HCT116 (cell line): ENCODE measurements at regions of chr1 and their contacts with region 1.

Region 1: GRCh38 chr1:150186789-150187559 is 37.3 kb downstream of the PLEKHO1 start:
- DNase-seq: peak; percentile 38
- ATAC-seq: peak; percentile 74
- H3K4me3 ChIP-seq: peak overlapping the region; percentile 22 to 44
- H3K27ac ChIP-seq: peak overlapping the region; percentile 61
- H3K4me1 ChIP-seq: peaks cover 14 to 25% of the 10 kb centered on the region in 2 experiments
- H3K27me3 ChIP-seq: no peaks in the 10 kb centered on the region
- CTCF ChIP-seq: peak; percentile 39 to 63 (median 56); a peak in 4 of 6 replicates
- POLR2A ChIP-seq: no peak
- RAD21 ChIP-seq: peak; percentile 83

Region 2: GRCh38 chr1:149962123-149962548 is 224.8 kb before region 1 on chr1:
- CTCF ChIA-PET with region 1: interaction called, 6 read pairs
- POLR2A ChIA-PET with region 1: no interaction called
- RAD21 ChIA-PET with region 1: no interaction called
- intact Hi-C with region 1: loop called (anchors 1 kb)
- DNase-seq: peak; percentile 58
- ATAC-seq: peak; percentile 92
- H3K4me3 ChIP-seq: no peak overlapping the region
- H3K27ac ChIP-seq: peak overlapping the region; percentile 33; the same call in 1 of the 2 replicates
- H3K4me1 ChIP-seq: no peaks in the 10 kb centered on the region
- H3K27me3 ChIP-seq: no peaks in the 10 kb centered on the region
- CTCF ChIP-seq: peak; percentile 50 to 83 (median 71); a peak in 5 of 6 replicates
- POLR2A ChIP-seq: no peak
- RAD21 ChIP-seq: peak; percentile 90

Region 3: DNA sequence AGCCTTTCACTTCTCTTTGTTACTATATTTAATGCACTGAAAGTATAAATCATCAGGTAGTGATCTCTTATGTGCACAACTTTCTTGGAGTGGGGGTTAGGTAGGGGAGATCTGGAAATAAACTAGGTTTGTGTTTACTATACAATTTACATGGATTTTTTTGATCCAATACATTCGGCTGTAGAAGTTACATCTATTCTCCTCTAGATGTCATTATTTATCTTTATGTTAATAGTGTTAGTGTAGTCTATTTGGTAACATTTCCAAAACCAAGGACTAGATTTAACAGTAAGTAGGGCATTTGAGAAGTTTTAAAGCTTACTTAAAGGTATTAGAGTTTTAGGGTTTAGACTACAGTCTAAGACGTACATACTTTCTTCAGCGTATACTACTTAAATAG is 114.0 kb before region 1 on chr1:
- CTCF ChIA-PET with region 1: interaction called, 28 read pairs
- POLR2A ChIA-PET with region 1: interaction called, 5 read pairs
- RAD21 ChIA-PET with region 1: interaction called in 1 of 2 experiments, 9 read pairs
- intact Hi-C with region 1: loop called (anchors 5 kb)
- DNase-seq: peak; percentile 12
- ATAC-seq: peak; percentile 53; the same call in 1 of the 2 replicates
- H3K4me3 ChIP-seq: no peak overlapping the region
- H3K27ac ChIP-seq: no peak overlapping the region
- H3K4me1 ChIP-seq: peaks cover 0 to 8% of the 10 kb centered on the region in 2 experiments; a peak in 2 of 4 replicates
- H3K27me3 ChIP-seq: no peaks in the 10 kb centered on the region
- CTCF ChIP-seq: peak; percentile 10 to 64 (median 57); a peak in 4 of 6 replicates
- POLR2A ChIP-seq: no peak
- RAD21 ChIP-seq: peak; percentile 66

Region 4: GRCh38 chr1:150259758-150260669 is 73.0 kb after region 1 on chr1:
- CTCF ChIA-PET with region 1: no interaction called
- POLR2A ChIA-PET with region 1: no interaction called
- RAD21 ChIA-PET with region 1: no interaction called
- intact Hi-C with region 1: no loop called
- DNase-seq: no peak
- ATAC-seq: peak; percentile 78
- H3K4me3 ChIP-seq: peak overlapping the region; percentile 36 to 52
- H3K27ac ChIP-seq: peak overlapping the region; percentile 70
- H3K4me1 ChIP-seq: peaks cover 30 to 61% of the 10 kb centered on the region in 2 experiments
- H3K27me3 ChIP-seq: no peaks in the 10 kb centered on the region
- CTCF ChIP-seq: no peak
- POLR2A ChIP-seq: no peak
- RAD21 ChIP-seq: no peak